ENCODE measurements at regions of chr11 and their contacts with region 1.

Region 1: GRCh38 chr11:119057000-119057769 is at the start of gene HYOU1:
- DNase-seq: peak; percentile 96
- H3K4me3 ChIP-seq: peak within 1 kb of the TSS; percentile 72 to 86 (median 80)
- H3K27ac ChIP-seq: peak within 1 kb of the TSS; percentile 54
- H3K4me1 ChIP-seq: peaks cover 11% of the 10 kb centered on the region
- H3K27me3 ChIP-seq: no peaks in the 10 kb centered on the region
- CTCF ChIP-seq: peak in 1 of 2 donors; percentile 35
- POLR2A ChIP-seq: peak; percentile 84
- total RNA-seq, gene HYOU1: 286 and 302 TPM in 2 replicates

Region 2: GRCh38 chr11:118883368-118884071 is 173.7 kb before region 1 on chr11 and contains the start of gene CXCR5:
- CTCF ChIA-PET with region 1: no interaction called
- POLR2A ChIA-PET with region 1: no interaction called
- dilution Hi-C with region 1: no loop called
- intact Hi-C with region 1: no loop called
- DNase-seq: no peak
- H3K4me3 ChIP-seq: no peak within 1 kb of the TSS
- H3K27ac ChIP-seq: no peak within 1 kb of the TSS
- H3K4me1 ChIP-seq: no peaks in the 10 kb centered on the region
- H3K27me3 ChIP-seq: peaks cover 7 to 16% of the 10 kb centered on the region in 2 experiments
- CTCF ChIP-seq: no peak
- POLR2A ChIP-seq: no peak
- total RNA-seq, gene CXCR5: not detected in 2 replicates

Region 3: GRCh38 chr11:118928108-118928870 is 128.9 kb before region 1 on chr11:
- CTCF ChIA-PET with region 1: no interaction called
- POLR2A ChIA-PET with region 1: no interaction called
- dilution Hi-C with region 1: no loop called
- intact Hi-C with region 1: loop called (anchors 5 kb)
- DNase-seq: peak; percentile 91
- H3K4me3 ChIP-seq: peak overlapping the region; percentile 34 to 77 (median 64)
- H3K27ac ChIP-seq: peak overlapping the region; percentile 27
- H3K4me1 ChIP-seq: peaks cover 21% of the 10 kb centered on the region
- H3K27me3 ChIP-seq: peaks cover 0 to 2% of the 10 kb centered on the region in 2 experiments
- CTCF ChIP-seq: peak; percentile 89 to 92
- POLR2A ChIP-seq: no peak

Region 4: DNA sequence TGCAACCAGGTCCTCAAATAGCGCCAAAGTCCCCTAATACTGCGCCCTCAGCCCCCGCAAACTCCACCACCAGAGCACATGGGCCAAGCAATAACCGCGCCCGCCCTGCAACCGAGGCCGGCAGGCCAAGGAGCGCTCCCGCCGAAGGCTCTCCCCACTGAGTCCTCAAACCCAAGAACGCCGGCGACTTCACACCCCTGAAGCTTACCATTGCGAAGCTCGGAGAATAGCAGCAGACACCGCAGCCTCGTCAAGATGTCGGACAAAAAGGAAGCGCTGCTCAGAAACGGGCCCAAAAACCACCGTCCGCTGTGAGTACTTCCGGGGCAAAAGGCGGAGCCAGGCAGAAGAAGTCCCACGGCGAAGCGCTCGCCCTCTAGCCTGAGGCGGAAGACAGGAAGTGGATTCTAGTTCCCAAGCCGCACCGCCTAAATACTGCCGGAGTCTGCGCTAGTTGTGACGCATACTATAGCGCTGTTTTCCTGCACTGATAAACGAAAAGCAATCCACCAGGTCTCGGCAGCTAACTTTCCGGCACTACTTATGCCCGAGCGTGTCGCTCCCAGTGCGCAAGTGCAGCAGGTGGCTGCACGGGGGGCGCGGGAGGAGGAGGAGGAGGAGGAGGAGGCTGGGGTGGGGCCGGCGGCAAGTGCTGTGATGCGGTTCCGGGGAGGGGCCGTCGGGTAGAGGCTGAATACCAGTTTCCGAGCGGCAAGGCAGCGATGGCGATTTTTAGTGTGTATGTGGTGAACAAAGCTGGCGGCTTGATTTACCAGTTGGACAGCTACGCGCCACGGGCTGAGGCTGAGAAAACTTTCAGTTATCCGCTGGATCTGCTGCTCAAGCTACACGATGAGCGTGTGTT is 38.9 kb before region 1 on chr11 and contains the starts of genes RPS25 and TRAPPC4:
- CTCF ChIA-PET with region 1: interaction called, 3 read pairs
- POLR2A ChIA-PET with region 1: no interaction called
- dilution Hi-C with region 1: no loop called
- intact Hi-C with region 1: loop called (anchors 1 kb)
- DNase-seq: peak; percentile 97
- H3K4me3 ChIP-seq: peak within 1 kb of the TSS; percentile 79 to 98 (median 95)
- H3K27ac ChIP-seq: peak within 1 kb of the TSS; percentile 60
- H3K4me1 ChIP-seq: peaks cover 18% of the 10 kb centered on the region
- H3K27me3 ChIP-seq: no peaks in the 10 kb centered on the region
- CTCF ChIP-seq: no peak
- POLR2A ChIP-seq: peak; percentile 92
- total RNA-seq, gene RPS25: 992 and 1,027 TPM in 2 replicates
- total RNA-seq, gene TRAPPC4: 64.2 and 79.3 TPM in 2 replicates

Region 5: DNA sequence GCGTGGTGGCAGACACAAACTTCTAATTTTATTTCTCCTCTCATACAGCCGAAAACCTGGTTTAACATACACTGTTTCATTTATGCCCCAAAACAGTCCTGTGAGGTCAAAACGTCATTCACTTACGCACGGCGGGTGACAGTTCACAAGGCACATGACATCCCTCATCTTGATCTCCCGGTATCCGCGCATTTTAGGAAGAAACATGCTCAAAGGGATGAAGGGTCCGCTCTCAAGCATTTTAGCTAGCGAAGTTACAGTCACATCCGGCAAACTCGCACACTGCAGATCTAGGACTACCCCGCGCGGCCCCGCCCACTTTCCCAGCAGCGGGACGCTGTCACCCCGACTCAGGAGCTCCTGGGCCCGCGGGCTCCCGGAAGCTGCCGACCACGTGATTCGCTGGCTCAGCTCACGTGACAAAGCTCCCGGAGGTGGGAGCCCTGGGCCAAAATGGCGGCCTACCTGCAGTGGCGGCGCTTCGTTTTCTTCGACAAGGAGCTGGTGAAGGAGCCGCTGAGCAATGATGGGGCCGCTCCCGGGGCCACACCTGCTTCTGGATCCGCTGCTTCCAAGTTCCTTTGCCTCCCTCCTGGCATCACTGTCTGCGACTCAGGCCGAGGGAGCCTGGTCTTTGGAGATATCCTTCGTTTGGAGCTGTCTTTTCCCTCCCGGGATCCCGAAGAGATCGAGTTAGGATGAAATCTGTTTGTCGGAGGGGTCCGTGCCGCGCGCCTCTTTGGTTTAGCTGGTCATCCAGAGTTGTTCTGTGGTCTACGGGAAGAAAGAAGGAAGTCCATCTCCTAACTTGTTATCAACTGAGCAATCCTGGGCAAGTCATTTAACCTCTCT is 10.4 kb after region 1 on chr11 and contains the start of gene VPS11:
- CTCF ChIA-PET with region 1: interaction called, 29 read pairs
- POLR2A ChIA-PET with region 1: interaction called, 7 read pairs
- dilution Hi-C with region 1: no loop called
- intact Hi-C with region 1: loop called (anchors 1 kb)
- DNase-seq: peak; percentile 95
- H3K4me3 ChIP-seq: peak within 1 kb of the TSS; percentile 56 to 97 (median 64)
- H3K27ac ChIP-seq: peak within 1 kb of the TSS; percentile 45
- H3K4me1 ChIP-seq: peaks cover 3% of the 10 kb centered on the region
- H3K27me3 ChIP-seq: no peaks in the 10 kb centered on the region
- CTCF ChIP-seq: no peak
- POLR2A ChIP-seq: peak; percentile 91
- total RNA-seq, gene VPS11: 27.0 and 31.0 TPM in 2 replicates

Region 6: GRCh38 chr11:119196833-119197483 is 139.8 kb after region 1 on chr11:
- CTCF ChIA-PET with region 1: no interaction called
- POLR2A ChIA-PET with region 1: no interaction called
- dilution Hi-C with region 1: no loop called
- intact Hi-C with region 1: loop called (anchors 2 kb)
- DNase-seq: peak; percentile 81
- H3K4me3 ChIP-seq: no peak overlapping the region
- H3K27ac ChIP-seq: no peak overlapping the region
- H3K4me1 ChIP-seq: no peaks in the 10 kb centered on the region
- H3K27me3 ChIP-seq: no peaks in the 10 kb centered on the region
- CTCF ChIP-seq: peak; percentile 69 to 70
- POLR2A ChIP-seq: no peak

Region 7: DNA sequence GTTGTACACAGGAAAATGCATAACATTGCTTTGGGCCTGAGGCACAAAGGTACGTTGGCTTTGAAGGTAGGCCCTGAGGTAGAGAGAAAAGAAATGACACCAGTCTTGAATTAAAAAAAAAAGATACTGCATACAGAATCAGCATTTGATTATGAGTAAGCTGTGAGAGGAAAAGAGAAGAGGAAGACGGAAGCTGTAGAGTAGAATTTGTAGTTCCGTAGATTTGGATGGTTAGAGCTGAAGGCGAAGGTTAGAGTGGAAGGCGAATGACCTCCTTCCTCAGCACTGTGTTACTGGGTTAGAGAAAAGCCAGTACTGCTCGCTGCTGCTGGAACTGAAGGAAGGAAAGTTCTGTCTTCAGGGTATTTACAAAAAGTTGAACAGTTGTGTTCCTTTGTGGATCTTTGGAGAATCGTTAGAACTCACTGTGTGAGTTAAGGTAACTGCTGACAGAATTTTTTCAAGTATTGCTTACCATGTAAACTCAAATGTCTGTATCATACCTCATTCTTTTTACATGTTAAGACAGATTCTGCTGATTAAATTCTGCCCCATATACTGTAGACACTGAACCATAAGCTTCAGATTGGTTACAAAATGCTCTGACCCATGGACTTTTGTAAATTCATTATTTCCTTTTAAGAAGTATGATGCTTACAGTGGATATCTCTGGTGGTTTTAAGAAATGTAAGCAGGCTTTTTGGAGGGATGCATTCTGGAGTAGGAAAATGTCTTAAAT is 209.5 kb after region 1 on chr11:
- CTCF ChIA-PET with region 1: no interaction called
- POLR2A ChIA-PET with region 1: no interaction called
- dilution Hi-C with region 1: no loop called
- intact Hi-C with region 1: no loop called
- DNase-seq: no peak
- H3K4me3 ChIP-seq: no peak overlapping the region
- H3K27ac ChIP-seq: no peak overlapping the region
- H3K4me1 ChIP-seq: peaks cover 24% of the 10 kb centered on the region
- H3K27me3 ChIP-seq: no peaks in the 10 kb centered on the region
- CTCF ChIP-seq: no peak
- POLR2A ChIP-seq: no peak

Measured in endothelial cell of umbilical vein (primary cell).